H1 (cell line): ENCODE measurements at regions of chr13 and their contacts with region 1.

Region 1: DNA sequence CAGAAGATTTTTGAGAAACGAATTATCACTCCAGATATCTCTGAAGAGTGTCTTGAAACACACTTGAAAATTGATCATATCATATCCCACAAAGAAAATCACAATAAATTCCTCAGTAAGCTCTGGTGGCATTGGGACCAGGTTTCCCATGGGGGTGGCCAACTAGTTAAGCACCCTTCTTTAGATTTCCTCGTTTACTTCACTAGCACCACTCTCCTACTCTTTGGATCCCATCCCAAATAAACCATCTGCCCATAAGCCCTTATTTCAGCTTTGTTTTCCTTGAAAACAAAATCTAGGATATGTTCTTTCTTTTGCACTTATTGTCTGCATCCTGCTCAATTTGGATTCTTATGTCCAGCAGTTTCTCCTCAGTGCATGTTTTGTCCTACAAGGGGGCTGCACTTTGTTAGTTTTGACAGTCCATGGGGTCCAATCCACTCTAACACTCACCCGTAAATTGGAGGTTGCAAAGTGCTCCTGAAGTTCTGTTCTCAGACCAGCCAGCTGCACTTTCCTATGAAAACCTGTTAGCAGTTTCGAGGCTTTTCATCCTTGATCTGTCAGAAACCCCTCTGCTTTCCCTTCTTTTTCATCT is 40.3 kb upstream of the FAM124A start:
- DNase-seq: no peak
- H3K4me3 ChIP-seq: no peak overlapping the region
- H3K27ac ChIP-seq: no peak overlapping the region
- H3K4me1 ChIP-seq: peaks cover 0 to 4% (median 1%) of the 10 kb centered on the region in 4 experiments; a peak in 2 of 7 replicates
- H3K27me3 ChIP-seq: no peaks in the 10 kb centered on the region
- CTCF ChIP-seq: no peak
- EP300 ChIP-seq: no peak
- POLR2A ChIP-seq: peak; percentile 6 to 45
- RAD21 ChIP-seq: no peak

Region 2: GRCh38 chr13:51148952-51149573 is 32.8 kb before region 1 on chr13:
- CTCF ChIA-PET with region 1: interaction called, 6 read pairs
- POLR2A ChIA-PET with region 1: interaction called, 494 read pairs
- DNase-seq: peak in 1 of 2 experiments; percentile 66
- H3K4me3 ChIP-seq: peak overlapping the region in 2 of 4 experiments; percentile 4 to 23; a peak in 3 of 8 replicates
- H3K27ac ChIP-seq: peak overlapping the region; percentile 56
- H3K4me1 ChIP-seq: peaks cover 11 to 32% (median 26%) of the 10 kb centered on the region in 4 experiments
- H3K27me3 ChIP-seq: no peaks in the 10 kb centered on the region
- CTCF ChIP-seq: peak; percentile 32 to 80 (median 58); a peak in 3 of 4 replicates
- EP300 ChIP-seq: no peak
- POLR2A ChIP-seq: no peak
- RAD21 ChIP-seq: peak; percentile 87 to 90

Region 3: DNA sequence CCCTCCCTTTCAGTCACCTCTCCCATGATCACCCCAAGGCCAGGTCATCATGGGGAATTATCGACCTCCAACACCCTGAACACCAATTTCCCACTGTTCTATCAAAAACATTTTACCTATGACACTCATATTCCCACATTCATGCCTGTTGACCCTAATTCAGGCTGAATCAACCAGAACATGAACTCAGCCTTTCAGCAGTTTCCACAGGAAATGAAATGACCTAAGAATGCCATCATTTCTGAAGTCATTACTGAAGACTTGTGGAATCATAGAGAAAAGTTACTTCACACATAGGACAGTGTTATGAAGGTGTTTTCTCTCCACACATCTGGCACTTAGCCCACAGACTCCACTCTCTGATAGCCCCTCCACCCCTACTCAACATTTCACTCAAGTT is 10.5 kb after region 1 on chr13:
- CTCF ChIA-PET with region 1: interaction called, 6 read pairs
- POLR2A ChIA-PET with region 1: interaction called, 183 read pairs
- DNase-seq: peak in 1 of 2 experiments; percentile 20
- H3K4me3 ChIP-seq: no peak overlapping the region
- H3K27ac ChIP-seq: no peak overlapping the region
- H3K4me1 ChIP-seq: no peaks in the 10 kb centered on the region
- H3K27me3 ChIP-seq: peaks cover 0 to 2% (median 0%) of the 10 kb centered on the region in 4 experiments; a peak in 2 of 7 replicates
- CTCF ChIP-seq: no peak
- EP300 ChIP-seq: no peak
- POLR2A ChIP-seq: no peak
- RAD21 ChIP-seq: no peak

Region 4: DNA sequence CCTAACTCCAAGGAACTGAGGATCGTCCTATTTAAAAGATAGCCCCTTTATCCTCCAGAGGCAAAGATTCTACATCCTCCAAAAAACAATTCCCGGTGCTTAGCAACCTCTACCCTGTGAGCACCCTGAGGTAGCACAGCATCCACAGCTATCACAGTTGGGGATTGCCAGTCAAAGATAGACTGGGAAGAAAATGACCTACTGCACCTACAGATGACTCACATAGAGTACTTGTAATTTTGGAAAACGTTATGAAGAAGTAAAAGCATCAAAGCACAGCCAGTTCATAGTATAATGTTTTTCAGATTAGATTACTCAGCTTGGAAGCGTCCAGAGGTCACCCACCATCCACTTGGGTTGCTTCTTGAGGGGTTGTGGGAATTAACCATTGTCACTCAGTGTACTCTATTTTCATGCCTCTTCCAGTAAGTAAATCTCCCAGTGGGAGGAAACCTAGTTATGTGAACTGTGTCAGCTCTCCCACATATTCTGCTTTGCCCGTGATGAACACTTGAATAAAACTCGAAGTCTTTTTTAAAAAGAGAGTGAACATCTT is 31.4 kb after region 1 on chr13:
- CTCF ChIA-PET with region 1: no interaction called
- POLR2A ChIA-PET with region 1: interaction called, 87 read pairs
- DNase-seq: peak in 1 of 2 experiments; percentile 19
- H3K4me3 ChIP-seq: no peak overlapping the region
- H3K27ac ChIP-seq: no peak overlapping the region
- H3K4me1 ChIP-seq: peaks cover 2 to 9% (median 4%) of the 10 kb centered on the region in 4 experiments; a peak in 6 of 7 replicates
- H3K27me3 ChIP-seq: no peaks in the 10 kb centered on the region; a peak in 1 of 7 replicates
- CTCF ChIP-seq: no peak
- EP300 ChIP-seq: no peak
- POLR2A ChIP-seq: no peak
- RAD21 ChIP-seq: no peak

Region 5: GRCh38 chr13:51249770-51250741 is 68.2 kb after region 1 on chr13:
- CTCF ChIA-PET with region 1: no interaction called
- POLR2A ChIA-PET with region 1: interaction called, 110 read pairs
- DNase-seq: no peak
- H3K4me3 ChIP-seq: no peak overlapping the region
- H3K27ac ChIP-seq: no peak overlapping the region; the same call in 1 of the 2 replicates
- H3K4me1 ChIP-seq: peaks cover 5 to 30% (median 20%) of the 10 kb centered on the region in 4 experiments
- H3K27me3 ChIP-seq: no peaks in the 10 kb centered on the region
- CTCF ChIP-seq: peak in 1 of 3 experiments; percentile 82; a peak in 2 of 4 replicates
- EP300 ChIP-seq: no peak
- POLR2A ChIP-seq: no peak
- RAD21 ChIP-seq: peak; percentile 40 to 57